Activated CD8-positive, alpha-beta T cell treated with anti-CD3 and anti-CD28 coated beads, Interleukin-2, amount 10 ng/mL, durations not matched to agents 7 days and 5 days (primary cell): ENCODE measurements at regions of chr10 and their contacts with region 1.

Region 1: GRCh38 chr10:103918053-103918846 is at the start of gene STN1:
- DNase-seq: peak; percentile 97
- ATAC-seq: peak; percentile 95
- H3K4me3 Mint-ChIP-seq: peak within 1 kb of the TSS; percentile 98
- H3K27ac Mint-ChIP-seq: peak within 1 kb of the TSS; percentile 97
- H3K4me1 Mint-ChIP-seq: peaks cover 36% of the 10 kb centered on the region
- H3K27me3 Mint-ChIP-seq: no peaks in the 10 kb centered on the region
- total RNA-seq, gene STN1: 48.8 to 49.8 TPM

Region 2: DNA sequence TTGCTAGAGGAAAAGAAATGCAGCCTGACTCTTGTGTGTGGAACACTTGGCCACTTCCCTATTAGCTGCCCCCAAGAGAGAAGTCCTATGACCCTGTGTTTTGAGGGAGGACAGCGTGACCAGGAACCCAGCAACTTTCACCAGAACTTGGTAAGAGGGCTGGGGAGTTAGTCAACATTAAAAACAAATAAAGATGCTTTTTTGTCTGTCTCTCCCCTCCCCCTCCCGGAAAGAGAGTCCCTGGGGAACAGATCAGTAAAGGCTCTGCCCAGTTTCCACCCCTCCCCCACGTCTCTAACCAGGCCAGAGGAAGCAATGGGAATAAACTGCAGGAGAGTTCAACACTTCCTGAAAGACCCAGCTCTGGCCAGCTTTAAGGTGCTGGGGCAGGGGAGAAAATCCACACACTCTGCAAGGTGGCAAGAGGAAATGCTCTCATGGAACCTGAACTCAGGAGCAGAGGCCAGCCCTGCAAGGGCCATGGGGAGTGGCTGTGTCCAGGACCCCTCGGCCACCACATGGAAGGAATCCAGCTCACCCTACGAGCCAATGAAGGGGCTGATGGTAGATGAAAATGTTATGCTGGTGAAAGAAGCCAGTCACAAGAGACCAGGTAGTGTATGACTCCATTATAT is 84.4 kb before region 1 on chr10:
- CTCF ChIA-PET with region 1: no interaction called
- POLR2A ChIA-PET with region 1: no interaction called
- DNase-seq: no peak
- ATAC-seq: no peak
- H3K4me3 Mint-ChIP-seq: no peak overlapping the region
- H3K27ac Mint-ChIP-seq: no peak overlapping the region
- H3K4me1 Mint-ChIP-seq: no peaks in the 10 kb centered on the region
- H3K27me3 Mint-ChIP-seq: peaks cover 16% of the 10 kb centered on the region

Region 3: DNA sequence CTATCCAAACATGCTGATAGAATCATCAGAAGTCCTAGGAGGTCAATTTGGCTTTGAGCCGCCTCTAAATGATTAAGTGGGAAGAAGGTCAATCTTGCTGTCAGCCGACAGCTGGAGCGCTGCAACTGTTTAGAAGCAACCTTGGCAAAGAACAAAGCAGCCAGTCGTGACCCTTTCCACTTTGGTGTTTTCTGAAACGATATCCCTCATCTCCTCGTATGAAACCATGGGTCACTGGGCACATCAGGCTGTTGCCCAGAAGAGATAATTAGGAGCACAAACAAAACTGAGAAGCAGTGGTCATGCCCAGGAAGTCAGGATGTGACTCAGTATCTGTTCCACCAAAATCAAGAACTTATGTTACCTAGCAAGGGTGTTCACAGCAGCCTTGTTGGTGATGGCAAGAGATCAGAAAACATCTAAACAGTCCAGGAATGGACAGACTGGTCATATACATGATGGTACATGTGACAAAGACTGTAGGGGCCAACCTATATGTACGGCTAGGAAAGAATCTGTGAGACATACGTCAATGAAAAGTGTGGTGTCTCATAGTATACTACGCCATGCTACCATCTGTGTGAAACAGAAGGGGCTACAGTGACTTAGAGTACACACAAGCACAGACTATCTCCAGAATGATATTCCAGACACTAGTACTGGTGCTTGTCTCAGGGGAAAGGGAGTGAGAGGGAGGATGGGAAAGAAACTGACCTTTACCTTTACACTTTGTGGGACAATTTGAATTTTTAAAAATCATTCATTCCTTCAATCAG is 22.7 kb before region 1 on chr10:
- CTCF ChIA-PET with region 1: interaction called, 25 read pairs
- POLR2A ChIA-PET with region 1: interaction called, 4 read pairs
- DNase-seq: no peak
- ATAC-seq: peak; percentile 36
- H3K4me3 Mint-ChIP-seq: no peak overlapping the region
- H3K27ac Mint-ChIP-seq: peak overlapping the region; percentile 43
- H3K4me1 Mint-ChIP-seq: peaks cover 34% of the 10 kb centered on the region
- H3K27me3 Mint-ChIP-seq: no peaks in the 10 kb centered on the region

Region 4: DNA sequence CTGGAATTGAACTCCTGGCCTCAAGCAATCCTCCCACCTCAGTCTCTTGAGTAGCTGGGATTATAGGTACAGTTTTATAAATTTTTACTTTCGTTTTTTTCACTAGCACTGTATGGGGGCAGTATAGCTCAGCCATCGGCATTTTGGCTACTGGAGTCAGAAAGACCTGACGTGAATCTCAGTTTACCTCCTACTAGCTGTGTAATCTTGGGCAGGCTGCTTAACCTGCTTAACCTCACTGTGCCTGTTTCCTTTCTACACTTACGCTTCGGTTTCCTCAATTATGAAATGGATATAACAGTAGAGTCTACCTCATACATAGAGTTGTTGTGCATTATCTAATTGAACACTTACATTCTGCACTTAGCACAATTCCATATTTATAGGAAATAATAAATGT is 17.0 kb before region 1 on chr10:
- CTCF ChIA-PET with region 1: interaction called, 25 read pairs
- POLR2A ChIA-PET with region 1: interaction called, 8 read pairs
- DNase-seq: no peak
- ATAC-seq: peak; percentile 84
- H3K4me3 Mint-ChIP-seq: peak overlapping the region; percentile 10
- H3K27ac Mint-ChIP-seq: peak overlapping the region; percentile 48
- H3K4me1 Mint-ChIP-seq: peaks cover 49% of the 10 kb centered on the region
- H3K27me3 Mint-ChIP-seq: no peaks in the 10 kb centered on the region

Region 5: DNA sequence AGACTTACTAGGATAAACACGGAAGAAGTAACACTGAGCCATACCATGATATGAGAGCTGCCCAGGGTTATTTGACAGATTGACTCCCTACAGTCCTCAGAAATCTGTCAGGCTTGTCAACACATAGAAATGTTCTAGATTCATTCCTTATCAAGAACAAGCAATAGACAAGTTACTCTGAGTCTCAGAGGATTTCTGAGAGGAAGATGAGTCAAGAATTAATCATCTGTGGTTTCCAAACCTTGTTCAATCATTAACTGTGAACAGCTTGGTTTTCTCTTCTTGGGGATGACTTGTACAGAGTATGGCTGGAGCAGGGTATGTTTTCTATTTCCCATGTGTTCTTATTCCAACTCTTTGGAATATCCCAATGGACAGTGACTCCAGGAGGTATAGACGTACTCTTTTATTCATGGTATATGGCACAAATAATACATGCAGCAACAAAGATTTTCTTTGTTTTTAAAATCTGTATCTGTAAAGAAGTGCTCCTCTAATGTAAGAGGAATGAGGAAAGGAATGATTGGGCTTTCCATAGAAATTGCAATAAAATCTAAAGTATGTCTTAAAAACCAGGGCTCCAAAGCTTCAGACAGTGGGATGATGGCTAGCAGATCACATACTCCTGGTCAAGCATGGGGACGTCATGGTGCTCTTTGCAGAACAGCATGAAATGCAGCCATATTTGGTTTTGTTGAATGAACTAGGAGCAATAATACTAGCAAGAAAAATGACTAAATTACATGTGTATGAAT is 191.8 kb after region 1 on chr10:
- CTCF ChIA-PET with region 1: no interaction called
- POLR2A ChIA-PET with region 1: no interaction called
- DNase-seq: no peak
- ATAC-seq: no peak
- H3K4me3 Mint-ChIP-seq: no peak overlapping the region
- H3K27ac Mint-ChIP-seq: no peak overlapping the region
- H3K4me1 Mint-ChIP-seq: peaks cover 4% of the 10 kb centered on the region
- H3K27me3 Mint-ChIP-seq: peaks cover 15% of the 10 kb centered on the region